Activated CD4-positive, alpha-beta memory T cell treated with anti-CD3 and anti-CD28 coated beads, Interleukin-2, amount 10 ng/mL, durations not matched to agents 7 days and 5 days (primary cell): ENCODE measurements at regions of chr11 and their contacts with region 1.

Region 1: DNA sequence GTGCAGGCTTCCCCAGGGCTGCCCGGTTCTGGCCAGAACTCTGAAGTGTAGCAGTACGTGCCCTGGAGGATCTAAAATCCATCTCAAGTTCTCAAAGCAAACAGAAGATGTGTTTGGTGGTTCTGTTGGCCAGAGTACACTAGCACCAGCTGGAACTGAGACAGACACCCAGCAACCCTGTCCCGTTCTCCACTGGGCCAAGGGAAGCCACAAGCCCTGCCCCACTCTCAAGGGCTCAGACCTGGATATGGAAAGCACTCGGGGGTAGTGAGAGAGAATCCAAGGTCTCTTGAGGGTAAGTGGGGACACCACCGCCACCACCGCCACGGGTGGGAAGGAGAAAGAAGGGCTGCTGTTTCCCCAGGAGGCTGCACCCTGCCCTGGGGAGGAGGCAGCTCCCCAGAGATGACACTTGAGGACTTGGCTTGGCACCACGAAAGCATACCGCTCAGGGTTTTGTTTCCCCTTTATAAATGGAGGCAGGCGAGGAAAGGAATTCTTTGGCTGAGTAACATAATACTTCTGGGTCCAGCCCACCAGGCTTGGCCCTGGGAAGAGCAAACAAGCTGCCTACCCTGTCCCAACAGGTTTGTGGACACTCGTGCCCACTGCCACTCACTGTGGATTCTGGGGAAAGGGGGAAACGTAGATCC is 56.1 kb upstream of the POU2AF1 start:
- DNase-seq: no peak
- H3K4me3 Mint-ChIP-seq: no peak overlapping the region
- H3K27ac Mint-ChIP-seq: no peak overlapping the region
- H3K4me1 Mint-ChIP-seq: peaks cover 13% of the 10 kb centered on the region
- H3K27me3 Mint-ChIP-seq: peaks cover 5% of the 10 kb centered on the region

Region 2: DNA sequence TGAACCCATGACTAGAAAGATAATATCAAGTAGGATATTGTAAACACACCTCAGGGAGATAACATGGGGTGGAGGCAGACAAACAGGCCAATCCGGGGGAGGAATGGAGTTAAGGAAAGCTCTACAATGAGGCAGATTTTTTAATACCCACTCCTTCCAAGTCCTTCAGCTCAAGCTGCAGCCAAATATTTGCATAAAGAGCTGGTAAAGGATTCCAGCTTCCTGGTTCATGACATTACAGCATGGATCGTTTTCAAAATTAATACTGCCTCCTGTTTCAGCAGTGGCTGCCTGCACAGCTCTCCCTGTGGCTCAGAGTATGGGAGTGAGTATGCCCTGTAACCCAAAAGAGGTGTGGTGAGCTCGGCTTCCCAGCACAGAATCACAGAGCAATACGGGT is 131.7 kb before region 1 on chr11:
- CTCF ChIA-PET with region 1: no interaction called
- POLR2A ChIA-PET with region 1: no interaction called
- DNase-seq: no peak
- H3K4me3 Mint-ChIP-seq: no peak overlapping the region
- H3K27ac Mint-ChIP-seq: no peak overlapping the region
- H3K4me1 Mint-ChIP-seq: peaks cover under 1% of the 10 kb centered on the region
- H3K27me3 Mint-ChIP-seq: peaks cover 46% of the 10 kb centered on the region

Region 3: GRCh38 chr11:111446404-111447111 is 11.4 kb after region 1 on chr11:
- CTCF ChIA-PET with region 1: interaction called, 35 read pairs
- POLR2A ChIA-PET with region 1: interaction called, 10 read pairs
- DNase-seq: peak; percentile 87
- H3K4me3 Mint-ChIP-seq: no peak overlapping the region
- H3K27ac Mint-ChIP-seq: peak overlapping the region; percentile 32
- H3K4me1 Mint-ChIP-seq: peaks cover 19% of the 10 kb centered on the region
- H3K27me3 Mint-ChIP-seq: peaks cover 2% of the 10 kb centered on the region